ENCODE measurements at regions of chr20 and their contacts with region 1.

Region 1: DNA sequence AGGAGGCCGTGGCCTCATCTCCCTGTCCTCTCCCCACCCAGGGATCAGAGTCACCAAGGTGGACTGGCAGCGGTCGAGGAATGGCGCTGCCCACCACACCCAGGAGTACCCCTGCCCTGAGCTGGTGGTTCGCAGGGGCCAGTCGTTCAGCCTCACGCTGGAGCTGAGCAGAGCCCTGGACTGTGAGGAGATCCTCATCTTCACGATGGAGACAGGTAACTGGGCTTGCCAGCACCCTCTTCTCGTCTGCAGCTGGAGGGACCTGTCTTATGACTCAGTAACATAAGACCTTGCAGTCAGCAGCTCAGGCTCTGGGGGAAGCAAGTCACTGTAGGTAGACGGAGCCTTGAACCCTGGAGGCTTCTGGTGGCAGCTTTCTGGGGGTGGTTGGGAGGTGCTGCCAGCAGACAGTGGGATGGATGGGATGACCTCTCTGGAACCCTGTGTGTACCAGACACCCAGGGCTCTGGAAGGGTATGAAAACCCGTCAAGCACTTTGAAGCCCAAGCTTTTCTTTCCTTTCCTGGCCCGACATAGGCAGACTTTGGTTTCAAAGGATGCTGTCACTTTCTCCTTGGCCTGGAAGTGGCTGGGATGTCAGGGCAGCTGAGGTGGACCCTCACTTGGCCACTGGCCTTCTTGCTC is 13.8 kb downstream of the TGM6 start:
- DNase-seq: no peak
- CTCF ChIP-seq: no peak

Region 2: GRCh38 chr20:2379511-2380229 is 14.9 kb before region 1 on chr20:
- CTCF ChIA-PET with region 1: interaction called, 11 read pairs
- POLR2A ChIA-PET with region 1: no interaction called
- DNase-seq: no peak
- CTCF ChIP-seq: no peak

Measured in GM10248 (cell line).